GM18951 (cell line): ENCODE measurements at regions of chr6 and their contacts with region 1.

Region 1: DNA sequence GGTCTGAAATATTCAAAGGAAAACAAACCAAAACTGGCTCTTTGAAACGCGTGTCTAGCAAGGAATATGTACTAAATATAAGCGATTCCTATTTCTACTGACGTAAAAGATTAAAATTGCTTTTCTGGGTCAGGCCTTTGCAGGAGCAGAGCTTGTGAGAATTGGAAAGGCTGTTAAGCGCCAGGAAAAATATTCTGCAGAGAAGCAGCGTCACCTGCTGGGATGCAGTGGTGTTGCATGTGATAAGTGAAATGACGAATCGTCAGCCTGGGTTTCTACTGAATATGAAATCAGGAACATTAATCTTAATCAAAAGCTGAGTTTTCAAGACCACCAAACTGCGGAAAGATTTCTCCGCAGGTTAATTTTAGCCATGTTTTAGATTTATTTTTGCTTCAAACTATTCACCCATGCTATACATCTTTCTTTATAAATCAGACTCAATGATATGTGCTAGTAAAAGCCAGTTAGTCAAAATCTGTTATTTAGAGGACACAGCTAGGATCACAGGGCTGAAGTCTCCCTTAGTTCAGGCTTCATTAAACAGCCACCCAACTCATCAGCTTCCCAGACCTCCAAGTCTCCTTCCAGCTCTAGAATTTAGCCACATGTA is 67.4 kb downstream of the ALDH8A1 start:
- POLR2A ChIP-seq: no peak

Region 2: DNA sequence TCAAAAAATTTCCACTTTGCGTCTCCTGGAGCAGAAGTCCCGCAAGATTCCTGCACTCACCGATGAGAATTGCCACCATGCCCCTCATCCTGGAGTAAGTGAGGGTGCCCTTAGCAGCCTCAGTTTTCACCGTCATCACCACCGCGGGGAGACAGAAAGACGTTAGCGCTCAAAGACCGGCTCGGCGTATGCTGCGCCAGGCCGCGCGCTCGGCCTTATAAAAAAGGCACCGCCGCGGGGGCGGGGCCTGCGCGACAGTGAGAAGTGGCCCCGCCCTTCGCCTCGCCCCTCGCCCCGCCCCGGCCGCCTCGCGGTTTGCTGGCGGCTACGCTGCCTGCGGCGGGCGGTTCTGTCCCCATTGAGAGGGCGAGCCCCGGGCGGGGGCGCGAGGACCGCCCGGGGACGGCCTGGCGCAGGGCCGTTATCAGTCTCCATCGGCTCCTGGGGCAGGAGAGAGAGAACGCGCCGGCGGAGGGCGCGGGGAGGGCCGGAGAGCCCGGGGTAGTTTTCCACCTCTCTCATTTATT is 707.8 kb before region 1 on chr6:
- in situ Hi-C with region 1: loop called (anchors 25 kb)
- POLR2A ChIP-seq: peak; percentile 99

Region 3: GRCh38 chr6:134640975-134641429 is 241.5 kb before region 1 on chr6:
- in situ Hi-C with region 1: loop called (anchors 25 kb)
- POLR2A ChIP-seq: no peak